Tibial artery (tissue), 4 donors: ENCODE measurements at regions of chr1 and their contacts with region 1.

Region 1: GRCh38 chr1:44249543-44249942 is 36.3 kb downstream of the DMAP1 start:
- DNase-seq: no peak
- H3K4me3 ChIP-seq: no peak overlapping the region
- H3K27ac ChIP-seq: no peak overlapping the region
- H3K4me1 ChIP-seq: no peaks in the 10 kb centered on the region
- H3K27me3 ChIP-seq: no peaks in the 10 kb centered on the region
- CTCF ChIP-seq: no peak

Region 2: GRCh38 chr1:44318097-44319088 is 68.8 kb after region 1 on chr1:
- intact Hi-C with region 1: loop called (anchors 10 kb)
- DNase-seq: no peak
- H3K4me3 ChIP-seq: no peak overlapping the region
- H3K27ac ChIP-seq: no peak overlapping the region
- H3K4me1 ChIP-seq: peaks cover 0 to 6% (median 0%) of the 10 kb centered on the region in 4 donors
- H3K27me3 ChIP-seq: no peaks in the 10 kb centered on the region
- CTCF ChIP-seq: peak; percentile 50 to 73